HAP-1 (cell line): ENCODE measurements at regions of chr17 and their contacts with region 1.

Region 1: GRCh38 chr17:53032861-53033271 is 789.9 kb upstream of the KIF2B start:
- DNase-seq: peak; percentile 43 to 59
- H3K4me3 ChIP-seq: no peak overlapping the region
- H3K4me1 ChIP-seq: no peaks in the 10 kb centered on the region
- H3K27me3 ChIP-seq: no peaks in the 10 kb centered on the region

Region 2: GRCh38 chr17:53217311-53217710 is 184.4 kb after region 1 on chr17:
- in situ Hi-C with region 1: no loop called
- DNase-seq: no peak
- H3K4me3 ChIP-seq: no peak overlapping the region
- H3K4me1 ChIP-seq: no peaks in the 10 kb centered on the region
- H3K27me3 ChIP-seq: no peaks in the 10 kb centered on the region

Region 3: GRCh38 chr17:54891176-54891821 is 1858.4 kb after region 1 on chr17:
- in situ Hi-C with region 1: loop called (anchors 25 kb)
- DNase-seq: peak; percentile 28 to 39
- H3K4me3 ChIP-seq: no peak overlapping the region
- H3K4me1 ChIP-seq: no peaks in the 10 kb centered on the region
- H3K27me3 ChIP-seq: 0 out of 2 replicates have a peak, but pooled peaks cover 2% of the 10 kb centered on the region